Gastrocnemius medialis (tissue), 4 donors: ENCODE measurements at regions of chr16 and their contacts with region 1.

Region 1: DNA sequence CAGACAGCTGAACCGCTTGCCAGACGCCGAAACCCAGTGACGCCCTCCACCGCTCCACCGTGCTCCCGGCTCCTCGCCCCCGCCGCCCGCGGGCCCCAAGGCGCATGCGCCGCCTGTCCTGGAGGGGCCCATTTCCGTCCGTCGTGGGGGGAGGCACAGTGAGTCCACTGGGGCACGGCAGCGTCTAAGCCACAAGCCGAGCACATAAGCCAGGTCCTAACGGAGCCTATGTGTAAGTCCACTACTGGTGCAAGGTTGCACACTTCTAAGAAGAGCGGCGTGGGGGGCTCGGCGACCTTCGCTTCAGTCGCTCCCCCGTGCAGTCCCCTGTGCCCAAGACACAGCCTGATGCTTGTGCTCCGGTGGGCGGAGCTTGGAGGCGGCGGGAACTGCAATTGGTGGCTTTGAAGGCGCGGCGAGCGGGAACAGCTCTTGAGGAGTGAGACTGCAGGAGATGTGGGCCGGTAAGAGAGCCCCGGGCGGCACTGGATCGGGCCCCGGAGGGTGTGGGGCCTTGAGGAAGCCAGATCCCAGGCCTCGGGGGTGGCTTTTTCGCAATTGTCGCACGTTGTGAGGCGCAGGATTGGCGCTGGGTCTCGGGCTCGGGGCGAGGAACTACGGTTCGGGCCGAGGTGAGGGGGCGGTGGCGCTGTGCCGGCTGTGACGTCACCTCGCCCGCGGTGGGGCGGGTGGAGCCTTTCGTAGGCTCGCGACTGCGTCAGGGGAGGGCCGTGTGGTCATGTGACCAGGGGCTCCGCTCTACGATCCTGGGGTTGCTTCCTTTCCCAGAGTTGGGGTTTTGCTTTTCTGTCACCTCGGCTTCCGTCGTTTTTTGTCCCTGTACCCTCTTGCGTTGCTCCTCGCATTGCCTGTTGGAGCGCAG is at the starts of genes CENPN and CMC2:
- DNase-seq: peak; percentile 97 to 99
- ATAC-seq: peak; percentile 91 to 95
- H3K4me3 ChIP-seq: peak within 1 kb of the TSS; percentile 87 to 100 (median 98)
- H3K27ac ChIP-seq: peak within 1 kb of the TSS; percentile 95 to 100 (median 100)
- H3K4me1 ChIP-seq: peaks cover 33 to 35% of the 10 kb centered on the region in 2 donors
- H3K27me3 ChIP-seq: no peaks in the 10 kb centered on the region
- CTCF ChIP-seq: peak in 2 of 5 experiments; percentile 12 to 19
- POLR2A ChIP-seq: peak; percentile 97
- total RNA-seq, gene CENPN: 5.2 to 10.9 (median 7.5) TPM
- total RNA-seq, gene CMC2: 78.8 to 89.1 (median 82.7) TPM

Region 2: DNA sequence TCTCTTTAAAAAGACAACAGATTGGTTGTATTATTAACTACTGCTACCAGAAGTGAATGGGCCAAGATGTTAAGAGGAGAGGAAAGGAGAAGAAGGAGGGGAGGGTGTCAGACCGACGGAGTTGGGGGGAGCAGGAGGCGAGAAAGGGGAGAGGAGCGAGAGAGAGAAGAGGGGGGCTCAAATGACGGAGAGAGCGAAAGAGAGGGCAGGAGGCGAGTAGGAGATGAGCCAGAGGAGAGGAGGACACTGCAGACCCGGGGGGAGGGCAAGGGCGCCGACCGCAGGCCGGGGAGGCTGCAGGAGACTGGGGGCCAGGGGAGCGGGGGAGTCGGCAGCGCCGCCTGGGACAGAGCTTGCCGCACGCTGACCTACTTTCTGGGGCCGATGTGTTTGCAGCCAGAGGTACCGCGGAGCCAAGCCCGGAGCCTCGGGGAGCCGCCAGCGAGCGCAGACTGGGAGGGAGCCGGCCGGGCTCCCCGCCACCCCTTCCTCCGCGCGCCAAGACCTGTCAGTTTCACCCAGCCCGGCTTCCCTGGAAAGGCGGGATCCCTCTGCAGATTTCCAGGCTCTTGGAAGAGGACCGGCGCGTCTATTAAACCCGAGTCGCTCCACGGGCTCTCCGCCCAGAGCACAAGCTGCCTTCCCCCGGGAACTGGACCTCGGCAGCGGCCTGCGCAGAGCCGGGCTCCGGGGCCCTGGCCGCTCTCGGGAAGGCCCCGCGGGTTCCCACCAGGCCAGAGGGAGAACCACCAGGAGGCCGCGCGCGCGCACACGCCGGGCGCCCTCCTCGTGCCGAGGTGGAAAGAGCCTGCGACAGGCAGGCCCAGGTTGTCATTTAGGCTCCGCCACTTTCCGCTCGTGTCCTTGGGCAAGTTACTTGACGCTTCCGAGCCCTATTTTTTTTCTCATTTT is 75.0 kb before region 1 on chr16:
- in situ Hi-C with region 1: no loop called
- intact Hi-C with region 1: loop called (anchors 2 kb)
- DNase-seq: peak; percentile 53 to 56
- ATAC-seq: peak; percentile 76 to 81
- H3K4me3 ChIP-seq: peak overlapping the region; percentile 57 to 72 (median 62)
- H3K27ac ChIP-seq: peak overlapping the region; percentile 72 to 88 (median 85)
- H3K4me1 ChIP-seq: peaks cover 4 to 10% of the 10 kb centered on the region in 2 donors
- H3K27me3 ChIP-seq: no peaks in the 10 kb centered on the region
- CTCF ChIP-seq: no peak
- POLR2A ChIP-seq: no peak

Region 3: DNA sequence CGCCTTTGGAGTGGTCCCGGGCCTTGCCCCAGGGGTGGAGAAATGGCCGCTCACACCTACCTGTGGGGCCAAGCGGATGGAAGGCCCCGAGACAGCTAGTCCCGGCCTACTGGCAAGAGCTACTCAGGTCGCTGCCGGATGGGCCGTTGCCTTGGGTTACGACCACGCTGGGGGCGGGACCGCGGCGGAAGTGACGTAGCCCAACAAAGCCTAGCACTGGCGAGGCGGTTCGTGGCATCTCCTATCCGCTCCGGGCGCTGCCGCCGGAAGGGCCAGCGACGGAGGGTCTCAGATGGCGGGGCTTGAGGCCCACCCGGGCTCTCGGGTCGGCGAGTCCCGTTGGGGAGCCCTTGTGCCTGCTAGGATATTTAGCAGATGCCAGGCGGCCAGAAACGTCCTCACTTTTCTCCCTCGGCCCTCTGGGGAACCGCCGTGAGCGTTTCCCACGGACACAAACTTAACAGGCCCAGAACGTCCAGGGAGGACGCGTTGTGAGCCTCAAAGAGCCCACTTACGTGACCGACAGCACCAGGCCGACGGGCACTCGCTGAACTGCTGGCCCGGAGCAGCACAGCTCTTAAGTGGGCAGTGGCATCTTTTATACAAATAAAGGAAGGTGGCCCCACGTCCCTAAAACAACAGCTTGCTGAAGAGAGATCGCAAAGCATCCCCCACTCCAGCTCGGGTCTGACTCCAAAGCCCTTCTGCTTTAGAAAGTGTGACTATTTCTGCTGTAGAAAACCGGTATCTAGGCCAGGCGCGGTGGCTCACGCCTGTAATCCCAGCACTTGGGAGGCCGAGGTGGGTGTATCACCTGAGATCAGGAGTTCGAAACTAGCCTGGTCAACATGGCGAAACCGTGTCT is 70.3 kb after region 1 on chr16 and contains the start of gene C16orf46:
- in situ Hi-C with region 1: no loop called
- intact Hi-C with region 1: loop called (anchors 1 kb)
- DNase-seq: peak; percentile 94 to 95
- ATAC-seq: peak; percentile 94 to 97
- H3K4me3 ChIP-seq: peak within 1 kb of the TSS; percentile 73 to 90 (median 82)
- H3K27ac ChIP-seq: peak within 1 kb of the TSS; percentile 90 to 99 (median 94)
- H3K4me1 ChIP-seq: peaks cover 4 to 7% of the 10 kb centered on the region in 2 donors
- H3K27me3 ChIP-seq: no peaks in the 10 kb centered on the region
- CTCF ChIP-seq: no peak
- POLR2A ChIP-seq: peak; percentile 77 to 85
- total RNA-seq, gene C16orf46: 0.88 TPM in 1 of 4 donors, not detected in the others

Region 4: DNA sequence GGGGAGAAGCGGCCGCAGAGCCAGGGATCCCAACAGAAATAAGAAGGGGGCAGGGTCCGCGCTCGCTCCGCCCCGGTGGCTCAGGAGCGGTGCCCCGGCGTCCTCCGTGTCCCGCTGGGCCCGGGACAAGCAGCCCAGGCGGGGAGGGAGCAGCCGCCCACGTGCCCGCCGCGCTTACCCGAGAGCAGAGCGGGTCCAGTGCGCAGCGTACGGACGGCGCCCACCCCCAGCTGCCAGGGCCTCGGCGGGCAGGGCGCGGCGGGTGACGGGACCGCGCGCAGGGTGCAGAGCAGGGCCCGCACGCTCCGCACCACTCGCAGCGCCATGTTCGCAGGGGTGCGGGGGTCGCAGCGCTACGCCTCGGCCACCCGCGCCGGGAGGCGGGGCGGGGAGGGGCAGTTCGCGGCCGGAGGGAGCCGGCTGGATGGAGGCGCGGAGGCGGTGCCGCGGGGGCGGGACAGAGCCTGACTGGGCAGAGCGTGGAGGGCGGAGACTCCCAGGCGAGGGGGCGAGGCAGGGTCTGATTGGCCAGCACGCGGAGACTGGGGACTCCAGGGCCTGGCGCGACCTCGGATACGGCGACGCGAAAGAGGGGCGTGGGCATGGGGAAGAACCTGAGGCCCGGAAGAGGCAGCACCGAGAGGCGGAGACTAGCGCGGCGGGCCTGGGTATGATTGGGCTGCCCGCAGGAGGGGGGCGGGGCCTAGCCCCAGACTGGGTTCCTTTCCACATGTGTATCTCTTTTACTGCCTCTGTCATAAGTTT is 89.1 kb after region 1 on chr16 and contains the start of gene GCSH:
- in situ Hi-C with region 1: no loop called
- intact Hi-C with region 1: loop called (anchors 1 kb)
- DNase-seq: peak; percentile 99
- ATAC-seq: peak; percentile 95
- H3K4me3 ChIP-seq: peak within 1 kb of the TSS; percentile 71 to 97 (median 86)
- H3K27ac ChIP-seq: peak within 1 kb of the TSS; percentile 80 to 93 (median 90)
- H3K4me1 ChIP-seq: peaks cover 5 to 7% of the 10 kb centered on the region in 2 donors
- H3K27me3 ChIP-seq: no peaks in the 10 kb centered on the region
- CTCF ChIP-seq: no peak
- POLR2A ChIP-seq: peak; percentile 58 to 67
- total RNA-seq, gene GCSH: 18.5 to 40.4 (median 30.9) TPM

Region 5: GRCh38 chr16:81181013-81181720 is 174.1 kb after region 1 on chr16:
- in situ Hi-C with region 1: no loop called
- intact Hi-C with region 1: loop called (anchors 5 kb)
- DNase-seq: peak; percentile 87 to 92
- ATAC-seq: peak; percentile 97
- H3K4me3 ChIP-seq: peak overlapping the region in 2 of 4 donors; percentile 12 to 36
- H3K27ac ChIP-seq: peak overlapping the region; percentile 75 to 94 (median 83)
- H3K4me1 ChIP-seq: peaks cover 6 to 9% of the 10 kb centered on the region in 2 donors
- H3K27me3 ChIP-seq: no peaks in the 10 kb centered on the region
- CTCF ChIP-seq: no peak
- POLR2A ChIP-seq: no peak